Activated CD8-positive, alpha-beta memory T cell treated with anti-CD3 and anti-CD28 coated beads, Interleukin-2, amount 10 ng/mL, durations not matched to agents 7 days and 5 days (primary cell): ENCODE measurements at regions of chr5 and their contacts with region 1.

Region 1: DNA sequence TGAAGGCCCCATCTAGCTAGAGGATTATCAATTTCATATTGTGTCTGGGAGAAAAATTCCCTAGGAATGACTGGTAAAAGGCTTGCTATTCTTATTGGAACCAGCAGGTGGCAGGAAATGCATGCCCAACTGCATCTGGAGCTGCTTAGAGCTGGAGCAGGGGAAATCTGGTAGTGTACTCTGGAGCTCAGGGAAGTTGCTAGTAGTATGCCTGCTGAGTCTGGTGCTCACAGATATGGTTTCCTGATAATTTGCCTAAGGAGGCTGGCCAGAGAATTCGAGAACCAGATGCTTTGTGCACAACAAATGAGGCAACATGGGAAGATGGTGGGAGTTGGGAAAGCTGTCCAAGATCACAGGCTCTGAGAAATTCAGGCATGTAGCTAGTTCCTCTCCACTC is 53.7 kb downstream of the G3BP1 start:
- DNase-seq: peak; percentile 47
- ATAC-seq: no peak
- H3K4me3 Mint-ChIP-seq: no peak overlapping the region
- H3K27ac Mint-ChIP-seq: no peak overlapping the region
- H3K4me1 Mint-ChIP-seq: no peaks in the 10 kb centered on the region
- H3K27me3 Mint-ChIP-seq: no peaks in the 10 kb centered on the region

Region 2: GRCh38 chr5:151815051-151815450 is 10.4 kb before region 1 on chr5:
- CTCF ChIA-PET with region 1: interaction called, 12 read pairs
- DNase-seq: no peak
- ATAC-seq: no peak
- H3K4me3 Mint-ChIP-seq: no peak overlapping the region
- H3K27ac Mint-ChIP-seq: no peak overlapping the region
- H3K4me1 Mint-ChIP-seq: peaks cover 6% of the 10 kb centered on the region
- H3K27me3 Mint-ChIP-seq: no peaks in the 10 kb centered on the region

Region 3: GRCh38 chr5:152142840-152143469 is 317.5 kb after region 1 on chr5:
- CTCF ChIA-PET with region 1: interaction called, 106 read pairs
- DNase-seq: peak; percentile 65
- ATAC-seq: peak; percentile 71
- H3K4me3 Mint-ChIP-seq: no peak overlapping the region
- H3K27ac Mint-ChIP-seq: no peak overlapping the region
- H3K4me1 Mint-ChIP-seq: no peaks in the 10 kb centered on the region
- H3K27me3 Mint-ChIP-seq: peaks cover 6% of the 10 kb centered on the region

Region 4: DNA sequence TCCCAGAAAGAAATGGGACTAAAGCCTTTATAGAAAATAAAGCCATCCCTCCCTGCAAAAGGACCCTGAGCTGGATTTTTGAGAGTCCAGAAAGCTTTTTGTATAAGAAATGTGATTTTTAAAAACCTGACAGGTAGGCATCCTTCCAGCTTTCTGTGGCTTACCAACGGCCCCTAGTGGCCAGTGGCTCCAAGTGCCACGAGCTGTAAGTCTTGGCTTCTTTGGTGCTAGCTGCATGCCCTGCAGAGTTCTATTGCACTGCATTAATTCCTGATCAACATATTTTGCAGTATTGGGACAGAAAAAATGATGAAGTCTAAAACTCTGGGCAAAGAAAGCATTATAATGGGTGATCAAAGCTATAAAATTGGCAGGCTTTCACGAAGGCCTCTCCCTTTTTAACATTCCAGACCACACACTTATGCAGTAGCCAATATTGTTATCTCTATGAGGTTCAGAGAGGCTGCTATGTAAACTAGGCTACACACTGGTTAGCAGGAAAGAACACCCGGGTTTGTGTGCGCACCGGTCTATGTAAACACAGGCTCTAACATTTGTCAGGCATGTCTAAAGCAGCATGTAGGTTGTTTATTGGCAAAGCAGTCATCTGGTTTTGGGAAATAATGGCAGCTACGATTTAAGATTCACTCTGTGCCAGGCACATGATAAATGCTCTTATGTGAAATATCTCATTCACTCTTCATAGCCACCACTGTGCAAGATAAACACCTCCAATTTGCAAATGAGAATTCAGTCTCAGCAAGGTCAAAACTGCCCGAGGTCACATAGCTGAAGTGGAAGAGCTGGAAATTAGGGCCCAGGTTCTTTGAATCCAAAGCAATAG is 524.5 kb after region 1 on chr5:
- CTCF ChIA-PET with region 1: interaction called, 16 read pairs
- DNase-seq: peak; percentile 46
- ATAC-seq: no peak
- H3K4me3 Mint-ChIP-seq: no peak overlapping the region
- H3K27ac Mint-ChIP-seq: no peak overlapping the region
- H3K4me1 Mint-ChIP-seq: no peaks in the 10 kb centered on the region
- H3K27me3 Mint-ChIP-seq: peaks cover 3% of the 10 kb centered on the region